CD8-positive, alpha-beta T cell (primary cell): ENCODE measurements at regions of chr12 and their contacts with region 1.

Region 1: GRCh38 chr12:52879394-52880351 is 25.2 kb downstream of the KRT8 start:
- DNase-seq: peak; percentile 53 to 82 (median 74)
- ATAC-seq: peak; percentile 98
- H3K4me3 ChIP-seq: peak overlapping the region; percentile 12 to 31
- H3K4me3 Mint-ChIP-seq: peak overlapping the region; percentile 69
- H3K27ac ChIP-seq: no peak overlapping the region
- H3K27ac Mint-ChIP-seq: no peak overlapping the region
- H3K4me1 ChIP-seq: peaks cover 11% of the 10 kb centered on the region
- H3K4me1 Mint-ChIP-seq: peaks cover 9% of the 10 kb centered on the region
- H3K27me3 ChIP-seq: peaks cover 0 to 2% of the 10 kb centered on the region in 2 experiments
- H3K27me3 Mint-ChIP-seq: peaks cover 7% of the 10 kb centered on the region
- CTCF ChIP-seq: peak; percentile 90

Region 2: GRCh38 chr12:52327052-52327829 is 552.4 kb before region 1 on chr12:
- CTCF ChIA-PET with region 1: interaction called, 12 read pairs
- POLR2A ChIA-PET with region 1: no interaction called
- intact Hi-C with region 1: no loop called
- DNase-seq: peak; percentile 55 to 90 (median 80)
- ATAC-seq: peak; percentile 97
- H3K4me3 ChIP-seq: no peak overlapping the region
- H3K4me3 Mint-ChIP-seq: no peak overlapping the region
- H3K27ac ChIP-seq: no peak overlapping the region
- H3K27ac Mint-ChIP-seq: no peak overlapping the region
- H3K4me1 ChIP-seq: no peaks in the 10 kb centered on the region
- H3K4me1 Mint-ChIP-seq: peaks cover 5% of the 10 kb centered on the region
- H3K27me3 ChIP-seq: no peaks in the 10 kb centered on the region
- H3K27me3 Mint-ChIP-seq: peaks cover 13% of the 10 kb centered on the region
- CTCF ChIP-seq: peak; percentile 77

Region 3: GRCh38 chr12:52390739-52391617 is 488.7 kb before region 1 on chr12:
- CTCF ChIA-PET with region 1: interaction called, 7 read pairs
- POLR2A ChIA-PET with region 1: no interaction called
- intact Hi-C with region 1: loop called in 1 of 2 experiments (anchors 5 kb)
- DNase-seq: peak in 2 of 9 experiments; percentile 24 to 36
- ATAC-seq: no peak
- H3K4me3 ChIP-seq: no peak overlapping the region
- H3K4me3 Mint-ChIP-seq: no peak overlapping the region
- H3K27ac ChIP-seq: no peak overlapping the region
- H3K27ac Mint-ChIP-seq: no peak overlapping the region
- H3K4me1 ChIP-seq: no peaks in the 10 kb centered on the region
- H3K4me1 Mint-ChIP-seq: no peaks in the 10 kb centered on the region
- H3K27me3 ChIP-seq: no peaks in the 10 kb centered on the region
- H3K27me3 Mint-ChIP-seq: peaks cover 8% of the 10 kb centered on the region
- CTCF ChIP-seq: no peak

Region 4: DNA sequence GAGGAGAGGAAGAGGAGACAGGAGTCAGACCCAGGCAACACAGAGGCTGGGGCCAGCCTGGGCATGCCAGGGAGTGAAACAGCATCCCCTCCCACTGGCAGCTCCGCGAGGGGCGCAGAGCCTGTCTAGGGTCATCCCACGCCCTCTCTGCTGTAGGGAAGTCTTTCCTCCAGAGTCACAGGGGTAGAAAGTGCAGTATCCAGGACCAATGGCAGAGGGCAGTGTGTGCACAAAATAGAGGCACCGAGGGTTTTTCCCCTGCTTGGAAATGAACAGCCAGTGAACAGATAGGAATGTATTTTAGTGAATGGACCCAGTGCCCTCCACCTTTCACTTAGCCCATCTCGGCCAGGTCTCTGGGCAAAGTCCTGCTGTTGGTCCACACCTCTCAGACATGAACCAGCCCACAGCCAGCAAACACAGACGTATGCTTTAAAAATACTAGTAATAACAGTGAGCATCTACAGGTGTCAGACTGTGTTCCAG is 296.7 kb before region 1 on chr12:
- CTCF ChIA-PET with region 1: interaction called, 950 read pairs
- POLR2A ChIA-PET with region 1: interaction called, 8 read pairs
- intact Hi-C with region 1: loop called (anchors 1 kb)
- DNase-seq: peak; percentile 48 to 83 (median 70)
- ATAC-seq: peak; percentile 27
- H3K4me3 ChIP-seq: no peak overlapping the region
- H3K4me3 Mint-ChIP-seq: no peak overlapping the region
- H3K27ac ChIP-seq: no peak overlapping the region
- H3K27ac Mint-ChIP-seq: peak overlapping the region; percentile 52
- H3K4me1 ChIP-seq: peaks cover 45% of the 10 kb centered on the region
- H3K4me1 Mint-ChIP-seq: peaks cover 48% of the 10 kb centered on the region
- H3K27me3 ChIP-seq: no peaks in the 10 kb centered on the region
- H3K27me3 Mint-ChIP-seq: peaks cover 3% of the 10 kb centered on the region
- CTCF ChIP-seq: peak; percentile 76

Region 5: GRCh38 chr12:52608831-52609630 is 270.6 kb before region 1 on chr12:
- CTCF ChIA-PET with region 1: interaction called, 20 read pairs
- POLR2A ChIA-PET with region 1: no interaction called
- intact Hi-C with region 1: no loop called
- DNase-seq: peak in 4 of 9 experiments; percentile 26 to 60 (median 40)
- ATAC-seq: peak; percentile 29
- H3K4me3 ChIP-seq: no peak overlapping the region
- H3K4me3 Mint-ChIP-seq: peak overlapping the region; percentile 38
- H3K27ac ChIP-seq: peak overlapping the region in 1 of 2 experiments; percentile 5
- H3K27ac Mint-ChIP-seq: peak overlapping the region; percentile 95
- H3K4me1 ChIP-seq: peaks cover 97% of the 10 kb centered on the region
- H3K4me1 Mint-ChIP-seq: peaks cover 94% of the 10 kb centered on the region
- H3K27me3 ChIP-seq: no peaks in the 10 kb centered on the region
- H3K27me3 Mint-ChIP-seq: no peaks in the 10 kb centered on the region
- CTCF ChIP-seq: no peak

Region 6: GRCh38 chr12:52691076-52691840 is 188.4 kb before region 1 on chr12:
- CTCF ChIA-PET with region 1: interaction called, 3 read pairs
- POLR2A ChIA-PET with region 1: no interaction called
- intact Hi-C with region 1: loop called (anchors 5 to 10 kb)
- DNase-seq: peak; percentile 22 to 78 (median 65)
- ATAC-seq: peak; percentile 84
- H3K4me3 ChIP-seq: peak overlapping the region; percentile 44 to 47
- H3K4me3 Mint-ChIP-seq: peak overlapping the region; percentile 84
- H3K27ac ChIP-seq: no peak overlapping the region
- H3K27ac Mint-ChIP-seq: peak overlapping the region; percentile 89
- H3K4me1 ChIP-seq: peaks cover 19% of the 10 kb centered on the region
- H3K4me1 Mint-ChIP-seq: peaks cover 42% of the 10 kb centered on the region
- H3K27me3 ChIP-seq: no peaks in the 10 kb centered on the region
- H3K27me3 Mint-ChIP-seq: no peaks in the 10 kb centered on the region
- CTCF ChIP-seq: no peak

Region 7: GRCh38 chr12:52720437-52720836 is 159.2 kb before region 1 on chr12:
- CTCF ChIA-PET with region 1: no interaction called
- POLR2A ChIA-PET with region 1: no interaction called
- intact Hi-C with region 1: no loop called
- DNase-seq: no peak
- ATAC-seq: no peak
- H3K4me3 ChIP-seq: no peak overlapping the region
- H3K4me3 Mint-ChIP-seq: no peak overlapping the region
- H3K27ac ChIP-seq: no peak overlapping the region
- H3K27ac Mint-ChIP-seq: no peak overlapping the region
- H3K4me1 ChIP-seq: no peaks in the 10 kb centered on the region
- H3K4me1 Mint-ChIP-seq: no peaks in the 10 kb centered on the region
- H3K27me3 ChIP-seq: peaks cover 0 to under 1% of the 10 kb centered on the region in 2 experiments
- H3K27me3 Mint-ChIP-seq: peaks cover 7% of the 10 kb centered on the region
- CTCF ChIP-seq: no peak

Region 8: DNA sequence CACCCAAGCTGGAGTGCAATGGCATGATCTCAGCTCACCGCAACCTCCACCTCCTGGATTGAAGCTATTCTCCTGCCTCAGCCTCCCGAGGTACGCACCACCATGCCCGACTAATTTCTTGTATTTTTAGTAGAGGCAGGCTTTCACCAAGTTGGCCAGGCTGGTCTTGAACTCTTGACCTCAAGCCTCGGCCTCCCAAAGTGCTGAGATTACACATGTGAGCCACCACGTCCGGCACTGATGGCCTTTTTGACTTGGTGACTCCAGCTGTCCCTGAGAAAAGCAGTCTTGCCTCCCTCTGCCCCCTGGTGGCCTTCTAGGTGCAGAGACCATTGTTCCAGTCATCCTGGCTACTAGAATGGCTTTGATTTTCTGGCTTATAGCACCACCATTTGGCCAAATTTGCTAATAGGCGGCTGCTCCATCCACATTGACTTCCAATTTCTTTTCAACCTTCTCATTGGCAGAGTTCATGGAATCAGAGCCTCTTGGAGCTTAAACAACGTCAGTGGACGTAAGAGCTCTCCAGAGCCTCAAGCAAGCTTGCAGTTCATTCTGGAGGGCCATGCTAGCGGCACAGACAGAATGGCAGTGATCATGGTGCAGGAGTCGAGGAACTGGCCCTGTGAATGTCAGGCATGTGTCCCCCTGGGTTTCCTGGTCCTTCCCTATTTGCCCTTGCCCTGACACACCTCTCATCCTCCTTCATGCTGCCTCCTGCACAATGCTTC is 101.2 kb after region 1 on chr12:
- CTCF ChIA-PET with region 1: interaction called, 524 read pairs
- POLR2A ChIA-PET with region 1: no interaction called
- intact Hi-C with region 1: loop called in 1 of 2 experiments (anchors 1 kb)
- DNase-seq: peak; percentile 63 to 90 (median 83)
- ATAC-seq: peak; percentile 94
- H3K4me3 ChIP-seq: no peak overlapping the region
- H3K4me3 Mint-ChIP-seq: no peak overlapping the region
- H3K27ac ChIP-seq: no peak overlapping the region
- H3K27ac Mint-ChIP-seq: no peak overlapping the region
- H3K4me1 ChIP-seq: no peaks in the 10 kb centered on the region
- H3K4me1 Mint-ChIP-seq: no peaks in the 10 kb centered on the region
- H3K27me3 ChIP-seq: peaks cover 0 to 4% of the 10 kb centered on the region in 2 experiments
- H3K27me3 Mint-ChIP-seq: peaks cover 45% of the 10 kb centered on the region
- CTCF ChIP-seq: peak; percentile 92

Region 9: DNA sequence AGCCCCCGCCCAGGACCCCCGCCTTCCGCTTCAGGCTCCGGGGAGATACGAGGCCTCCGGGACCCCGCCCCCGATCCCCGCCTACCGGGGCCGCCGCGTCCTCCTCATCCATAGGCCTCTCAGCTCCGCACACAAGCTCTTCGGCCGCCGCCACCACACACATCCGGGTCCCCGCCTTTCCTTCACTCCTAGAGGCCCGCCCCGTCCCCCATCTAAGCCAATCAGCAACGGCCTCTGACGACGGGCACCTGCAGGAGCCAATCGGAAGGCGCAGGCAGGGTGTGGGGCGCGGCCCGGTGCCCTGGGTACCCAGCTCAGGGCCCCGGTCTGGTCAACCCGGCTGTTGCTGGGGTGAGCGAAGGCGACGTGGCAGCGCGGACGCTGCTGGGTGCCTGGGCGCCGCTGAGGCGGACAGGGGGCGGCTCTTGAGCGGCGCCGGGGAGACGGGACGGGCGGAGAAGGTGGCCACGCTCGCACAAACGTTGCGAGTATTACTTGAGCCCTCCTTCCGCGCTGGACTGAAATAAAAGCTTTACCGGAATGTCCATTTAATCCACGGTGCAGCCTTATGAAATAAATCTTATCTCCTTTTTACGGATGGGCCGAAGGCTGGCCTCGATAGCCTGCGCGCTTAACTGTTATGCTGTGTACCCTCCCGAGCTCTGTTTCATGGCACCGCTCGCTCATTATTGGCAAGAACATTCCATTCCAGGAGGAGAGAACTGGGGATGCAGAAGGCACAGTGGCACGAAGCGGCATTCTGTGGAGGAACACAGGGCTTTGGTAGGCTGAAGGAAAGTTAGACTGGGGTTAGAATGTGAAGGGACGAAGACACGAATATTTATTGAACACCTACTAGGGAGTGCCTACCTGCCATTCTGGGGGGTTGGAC is 199.8 kb after region 1 on chr12 and contains the start of gene SPRYD3:
- CTCF ChIA-PET with region 1: no interaction called
- POLR2A ChIA-PET with region 1: no interaction called
- intact Hi-C with region 1: no loop called
- DNase-seq: peak; percentile 95 to 98 (median 96)
- ATAC-seq: peak; percentile 94
- H3K4me3 ChIP-seq: peak within 1 kb of the TSS; percentile 66 to 92
- H3K4me3 Mint-ChIP-seq: peak within 1 kb of the TSS; percentile 92
- H3K27ac ChIP-seq: peak within 1 kb of the TSS; percentile 75 to 89
- H3K27ac Mint-ChIP-seq: peak within 1 kb of the TSS; percentile 96
- H3K4me1 ChIP-seq: peaks cover 13% of the 10 kb centered on the region
- H3K4me1 Mint-ChIP-seq: peaks cover 41% of the 10 kb centered on the region
- H3K27me3 ChIP-seq: no peaks in the 10 kb centered on the region
- H3K27me3 Mint-ChIP-seq: no peaks in the 10 kb centered on the region
- CTCF ChIP-seq: no peak
- total RNA-seq, gene SPRYD3: 25.1 to 25.6 TPM

Region 10: GRCh38 chr12:53231826-53232645 is 352.4 kb after region 1 on chr12 and contains the start of gene RARG:
- CTCF ChIA-PET with region 1: no interaction called
- POLR2A ChIA-PET with region 1: no interaction called
- intact Hi-C with region 1: no loop called
- DNase-seq: peak in 8 of 9 experiments; percentile 47 to 80 (median 66)
- ATAC-seq: peak; percentile 66
- H3K4me3 ChIP-seq: peak within 1 kb of the TSS; percentile 57
- H3K4me3 Mint-ChIP-seq: peak within 1 kb of the TSS; percentile 89
- H3K27ac ChIP-seq: peak within 1 kb of the TSS in 1 of 2 experiments; percentile 66
- H3K27ac Mint-ChIP-seq: peak within 1 kb of the TSS; percentile 78
- H3K4me1 ChIP-seq: peaks cover 59% of the 10 kb centered on the region
- H3K4me1 Mint-ChIP-seq: peaks cover 60% of the 10 kb centered on the region
- H3K27me3 ChIP-seq: no peaks in the 10 kb centered on the region
- H3K27me3 Mint-ChIP-seq: no peaks in the 10 kb centered on the region
- CTCF ChIP-seq: no peak
- total RNA-seq, gene RARG: 16.1 to 16.5 TPM